Left colon (tissue), 2 donors: ENCODE measurements at regions of chr10 and their contacts with region 1.

Region 1: GRCh38 chr10:89426230-89426868 is 12.0 kb downstream of the IFIT5 start:
- DNase-seq: no peak
- ATAC-seq: peak; percentile 76

Region 2: GRCh38 chr10:89502556-89502955 is 76.2 kb after region 1 on chr10:
- intact Hi-C with region 1: no loop called
- DNase-seq: no peak
- ATAC-seq: no peak

Region 3: GRCh38 chr10:89563861-89564478 is 137.6 kb after region 1 on chr10:
- intact Hi-C with region 1: loop called (anchors 5 kb)
- DNase-seq: no peak
- ATAC-seq: peak; percentile 71

Region 4: DNA sequence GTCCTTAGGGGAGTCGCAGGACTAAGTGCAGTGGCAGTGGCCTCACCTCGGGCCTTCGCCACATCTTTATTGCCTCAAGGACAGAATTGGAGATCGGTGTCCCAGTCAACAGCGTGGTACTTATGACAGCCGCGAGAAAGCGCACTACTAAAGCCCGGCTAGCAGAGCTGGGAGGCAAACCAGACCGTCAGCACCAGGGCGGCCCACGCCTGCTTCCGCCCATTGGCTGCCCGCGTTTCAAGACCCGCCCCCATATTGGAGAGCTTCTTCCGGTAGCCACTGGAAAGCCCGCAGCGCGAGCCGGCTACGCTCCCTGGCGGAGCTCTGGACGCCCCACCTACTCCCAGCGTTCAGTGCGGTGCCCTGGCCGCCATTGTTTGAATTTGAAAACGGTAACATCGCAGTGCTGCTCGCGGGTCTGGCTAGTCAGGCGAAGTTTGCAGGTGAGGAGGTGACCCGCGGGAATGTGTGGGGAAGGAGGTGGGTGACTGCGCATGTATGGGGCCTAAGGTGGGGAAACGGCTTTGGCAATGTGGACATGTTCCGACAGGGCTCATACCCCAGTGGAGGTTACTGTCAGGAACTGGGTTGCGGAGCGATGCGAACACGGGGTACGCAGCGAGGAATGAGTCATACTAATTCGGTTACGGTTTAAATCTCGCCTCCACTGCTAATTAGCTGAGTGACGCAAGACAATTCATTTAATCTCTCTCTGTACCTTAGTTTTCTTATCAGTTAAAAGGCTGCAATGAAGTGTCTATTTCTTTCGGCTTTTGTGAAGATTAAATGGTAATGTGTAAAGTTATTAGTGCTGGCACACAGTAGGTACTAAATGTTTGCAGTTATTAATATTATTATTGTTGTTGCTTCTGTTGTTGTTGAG is 275.1 kb after region 1 on chr10 and contains the start of gene KIF20B:
- intact Hi-C with region 1: loop called in 1 of 2 experiments (anchors 10 kb)
- DNase-seq: peak; percentile 96
- ATAC-seq: peak; percentile 99
- total RNA-seq, gene KIF20B: 5.6 to 8.9 TPM